ENCODE measurements at regions of chr18 and their contacts with region 1.

Region 1: DNA sequence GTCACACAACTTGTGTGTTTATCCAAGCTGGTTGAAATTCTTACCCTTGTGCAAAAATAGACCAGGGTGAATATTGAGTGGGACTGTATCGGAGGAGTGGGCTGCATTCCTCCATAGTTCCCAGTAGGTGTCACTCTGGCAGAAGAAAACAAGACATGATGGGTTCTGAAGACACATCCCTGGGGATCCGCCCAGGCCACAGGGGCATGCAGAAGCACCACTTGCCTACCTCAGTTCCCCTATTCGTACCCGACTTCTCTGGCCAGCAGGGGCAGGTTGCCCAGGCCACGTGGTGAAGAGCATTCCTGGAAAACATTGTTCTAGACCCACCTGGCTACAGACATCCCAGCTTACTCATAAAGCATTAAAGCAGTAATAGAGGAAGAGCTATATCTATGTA is 168.2 kb downstream of the FAM210A start:
- DNase-seq: no peak
- ATAC-seq: peak; percentile 71
- H3K4me3 ChIP-seq: no peak overlapping the region
- H3K27ac ChIP-seq: no peak overlapping the region
- H3K4me1 ChIP-seq: peaks cover 17% of the 10 kb centered on the region
- H3K27me3 ChIP-seq: no peaks in the 10 kb centered on the region; a peak in 1 of 4 replicates
- CTCF ChIP-seq: peak; percentile 79 to 91 (median 85)
- EP300 ChIP-seq: no peak
- POLR2A ChIP-seq: no peak
- RAD21 ChIP-seq: peak; percentile 94

Region 2: GRCh38 chr18:13216092-13216582 is 342.0 kb before region 1 on chr18:
- CTCF ChIA-PET with region 1: interaction called, 17 read pairs
- POLR2A ChIA-PET with region 1: no interaction called
- RAD21 ChIA-PET with region 1: interaction called, 19 read pairs
- SMC1A ChIA-PET with region 1: interaction called, 16 read pairs
- in situ Hi-C with region 1: no loop called
- intact Hi-C with region 1: no loop called
- DNase-seq: peak; percentile 4
- ATAC-seq: peak; percentile 79
- H3K4me3 ChIP-seq: no peak overlapping the region
- H3K27ac ChIP-seq: no peak overlapping the region
- H3K4me1 ChIP-seq: no peaks in the 10 kb centered on the region
- H3K27me3 ChIP-seq: peaks cover 8 to 25% of the 10 kb centered on the region in 2 experiments
- CTCF ChIP-seq: peak; percentile 49 to 70 (median 57)
- EP300 ChIP-seq: no peak
- POLR2A ChIP-seq: no peak
- RAD21 ChIP-seq: peak; percentile 55

Region 3: GRCh38 chr18:13577091-13577697 is 19.1 kb after region 1 on chr18:
- CTCF ChIA-PET with region 1: interaction called, 26 read pairs
- POLR2A ChIA-PET with region 1: interaction called, 67 read pairs
- RAD21 ChIA-PET with region 1: interaction called, 110 read pairs
- SMC1A ChIA-PET with region 1: interaction called, 133 read pairs
- in situ Hi-C with region 1: no loop called
- intact Hi-C with region 1: loop called (anchors 2 kb)
- DNase-seq: peak; percentile 90
- ATAC-seq: peak; percentile 93
- H3K4me3 ChIP-seq: peak overlapping the region; percentile 51
- H3K27ac ChIP-seq: peak overlapping the region; percentile 92
- H3K4me1 ChIP-seq: peaks cover 33% of the 10 kb centered on the region
- H3K27me3 ChIP-seq: no peaks in the 10 kb centered on the region
- CTCF ChIP-seq: no peak
- EP300 ChIP-seq: peak; percentile 89 to 93
- POLR2A ChIP-seq: peak; percentile 79
- RAD21 ChIP-seq: no peak

Region 4: DNA sequence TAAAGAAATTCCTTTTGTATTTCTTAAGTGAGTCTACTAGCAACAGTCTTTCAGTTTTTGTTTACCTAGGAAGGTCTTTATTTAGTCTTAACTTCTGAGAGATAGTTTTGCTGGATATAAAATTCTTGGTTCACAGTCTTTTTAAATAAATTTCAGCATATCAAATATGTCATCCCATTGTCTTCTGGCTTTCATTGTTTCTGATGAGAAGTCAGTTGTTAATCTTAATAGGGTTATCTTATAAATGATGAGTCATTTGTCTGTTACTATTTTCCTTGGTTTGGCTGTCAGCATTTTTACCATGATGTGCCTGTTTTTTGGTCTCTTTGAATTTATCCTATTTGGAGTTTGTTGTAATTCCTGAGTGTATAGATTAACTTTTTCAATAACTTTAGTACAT is 38.9 kb after region 1 on chr18:
- CTCF ChIA-PET with region 1: interaction called, 7 read pairs
- POLR2A ChIA-PET with region 1: no interaction called
- RAD21 ChIA-PET with region 1: interaction called, 3 read pairs
- SMC1A ChIA-PET with region 1: interaction called, 13 read pairs
- in situ Hi-C with region 1: no loop called
- intact Hi-C with region 1: no loop called
- DNase-seq: no peak
- ATAC-seq: no peak
- H3K4me3 ChIP-seq: no peak overlapping the region
- H3K27ac ChIP-seq: no peak overlapping the region
- H3K4me1 ChIP-seq: 0 out of 2 replicates have a peak, but pooled peaks cover 3% of the 10 kb centered on the region
- H3K27me3 ChIP-seq: no peaks in the 10 kb centered on the region
- CTCF ChIP-seq: no peak
- EP300 ChIP-seq: no peak
- POLR2A ChIP-seq: no peak
- RAD21 ChIP-seq: no peak

Region 5: DNA sequence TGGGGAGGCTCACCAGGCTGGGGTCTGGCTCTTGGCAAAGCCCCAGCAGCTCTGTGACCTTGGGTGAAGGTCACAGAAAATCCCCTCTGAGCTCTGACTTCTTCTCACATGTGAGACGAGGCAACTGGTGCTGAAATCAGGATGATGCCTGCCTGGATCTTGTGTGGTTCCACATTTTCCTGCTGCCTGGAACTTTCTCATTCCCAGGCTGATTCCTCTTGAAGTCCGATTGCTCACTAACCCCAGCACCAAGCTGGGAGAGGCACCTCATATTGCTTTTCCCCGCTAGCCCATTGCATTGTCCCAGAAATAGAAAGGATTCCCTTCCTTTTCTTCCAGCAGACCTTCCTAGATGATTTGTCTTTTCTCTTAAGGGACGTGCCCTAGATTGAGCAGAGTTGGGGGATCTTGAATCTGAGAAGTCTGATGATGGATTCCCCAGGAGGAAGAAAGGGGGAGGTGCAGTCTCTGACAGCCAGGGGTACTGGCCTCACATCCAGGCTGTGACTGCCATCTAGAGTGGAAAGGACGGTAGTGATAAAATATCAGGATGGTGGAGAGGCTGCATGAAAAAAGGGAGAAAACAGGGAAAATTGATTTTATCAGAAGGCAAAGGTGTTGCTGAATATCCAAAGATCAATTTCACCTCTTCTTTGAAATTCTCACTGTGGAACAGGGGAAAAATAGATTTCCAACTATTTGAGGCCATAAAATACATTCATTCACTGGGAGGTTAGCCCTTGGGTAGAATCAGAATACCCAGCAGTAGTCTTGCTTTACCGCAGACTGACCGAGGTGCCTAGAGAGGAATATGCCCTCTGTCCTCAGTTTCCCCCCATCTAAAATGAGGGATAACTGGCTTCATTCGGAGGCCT is 72.0 kb after region 1 on chr18:
- CTCF ChIA-PET with region 1: interaction called, 337 read pairs
- POLR2A ChIA-PET with region 1: interaction called, 5 read pairs
- RAD21 ChIA-PET with region 1: interaction called, 161 read pairs
- SMC1A ChIA-PET with region 1: interaction called, 241 read pairs
- in situ Hi-C with region 1: no loop called
- intact Hi-C with region 1: loop called (anchors 1 kb)
- DNase-seq: peak; percentile 48
- ATAC-seq: peak; percentile 92
- H3K4me3 ChIP-seq: no peak overlapping the region
- H3K27ac ChIP-seq: no peak overlapping the region; the same call in 1 of the 2 replicates
- H3K4me1 ChIP-seq: peaks cover 5% of the 10 kb centered on the region
- H3K27me3 ChIP-seq: no peaks in the 10 kb centered on the region
- CTCF ChIP-seq: peak; percentile 76 to 98 (median 81)
- EP300 ChIP-seq: no peak
- POLR2A ChIP-seq: no peak
- RAD21 ChIP-seq: peak; percentile 100

Region 6: GRCh38 chr18:13720123-13720522 is 162.0 kb after region 1 on chr18:
- CTCF ChIA-PET with region 1: interaction called, 6 read pairs
- POLR2A ChIA-PET with region 1: no interaction called
- RAD21 ChIA-PET with region 1: interaction called, 4 read pairs
- SMC1A ChIA-PET with region 1: interaction called, 3 read pairs
- in situ Hi-C with region 1: loop called (anchors 5 kb)
- intact Hi-C with region 1: loop called (anchors 5 kb)
- DNase-seq: no peak
- ATAC-seq: no peak; the same call in 2 of the 3 replicates
- H3K4me3 ChIP-seq: no peak overlapping the region
- H3K27ac ChIP-seq: no peak overlapping the region
- H3K4me1 ChIP-seq: no peaks in the 10 kb centered on the region; the same call in 1 of the 2 replicates
- H3K27me3 ChIP-seq: no peaks in the 10 kb centered on the region
- CTCF ChIP-seq: no peak
- EP300 ChIP-seq: no peak
- POLR2A ChIP-seq: no peak
- RAD21 ChIP-seq: no peak

Region 7: GRCh38 chr18:13813271-13813849 is 255.2 kb after region 1 on chr18:
- CTCF ChIA-PET with region 1: interaction called, 44 read pairs
- POLR2A ChIA-PET with region 1: no interaction called
- RAD21 ChIA-PET with region 1: interaction called, 13 read pairs
- SMC1A ChIA-PET with region 1: interaction called, 11 read pairs
- in situ Hi-C with region 1: loop called (anchors 5 kb)
- intact Hi-C with region 1: loop called (anchors 5 kb)
- DNase-seq: no peak
- ATAC-seq: peak; percentile 98
- H3K4me3 ChIP-seq: no peak overlapping the region
- H3K27ac ChIP-seq: no peak overlapping the region
- H3K4me1 ChIP-seq: no peaks in the 10 kb centered on the region
- H3K27me3 ChIP-seq: peaks cover 2 to 3% of the 10 kb centered on the region in 2 experiments; a peak in 3 of 4 replicates
- CTCF ChIP-seq: peak; percentile 79 to 89 (median 80)
- EP300 ChIP-seq: no peak
- POLR2A ChIP-seq: no peak
- RAD21 ChIP-seq: peak; percentile 63

Region 8: DNA sequence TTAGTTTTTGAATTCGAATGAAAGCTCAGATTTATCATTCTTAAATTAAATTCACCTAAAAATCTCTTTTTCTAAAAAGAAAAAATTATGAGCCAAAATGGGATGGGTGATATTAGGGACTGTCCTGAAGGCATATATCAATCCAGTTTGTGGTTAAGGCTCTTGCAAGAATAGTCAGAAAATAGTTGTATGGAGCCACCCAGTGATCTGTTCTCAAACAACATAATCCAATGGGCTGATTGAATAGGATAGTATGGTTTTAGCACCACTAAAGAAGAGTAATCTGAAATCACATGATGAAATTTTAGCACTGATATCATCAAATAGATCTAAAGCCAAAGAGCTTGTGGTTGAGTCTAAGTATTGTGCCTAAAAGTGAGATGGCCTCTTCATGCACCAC is 485.8 kb after region 1 on chr18:
- CTCF ChIA-PET with region 1: no interaction called
- POLR2A ChIA-PET with region 1: no interaction called
- RAD21 ChIA-PET with region 1: no interaction called
- SMC1A ChIA-PET with region 1: no interaction called
- in situ Hi-C with region 1: no loop called
- intact Hi-C with region 1: no loop called
- DNase-seq: no peak
- ATAC-seq: no peak
- H3K4me3 ChIP-seq: no peak overlapping the region
- H3K27ac ChIP-seq: no peak overlapping the region
- H3K4me1 ChIP-seq: no peaks in the 10 kb centered on the region
- H3K27me3 ChIP-seq: no peaks in the 10 kb centered on the region
- CTCF ChIP-seq: no peak
- EP300 ChIP-seq: no peak
- POLR2A ChIP-seq: no peak
- RAD21 ChIP-seq: no peak